Activated CD4-positive, alpha-beta T cell treated with anti-CD3 and anti-CD28 coated beads, Interleukin-2, amount 10 ng/mL, durations not matched to agents 24 days and 14 days (primary cell): ENCODE measurements at regions of chr9 and their contacts with region 1.

Region 1: DNA sequence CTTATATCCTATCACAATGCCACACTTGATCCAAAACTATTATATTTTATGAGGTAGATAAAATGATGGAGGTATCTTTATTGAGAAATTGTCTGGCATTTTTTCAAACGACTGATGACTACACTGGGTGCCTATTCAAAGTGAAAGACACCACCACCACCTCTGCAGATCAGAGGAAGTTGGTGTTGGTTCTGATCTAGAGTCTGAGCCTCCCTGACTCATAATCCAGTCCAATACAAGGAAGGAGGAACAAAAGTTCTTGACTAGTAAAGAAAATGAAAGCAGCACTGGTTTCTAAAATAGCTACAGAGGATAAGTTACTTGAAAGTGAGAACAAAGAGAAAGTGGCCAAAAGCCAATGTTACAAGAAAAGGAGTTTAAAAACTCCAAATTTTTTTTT is 139.9 kb downstream of the RFX3 start:
- DNase-seq: peak; percentile 77
- H3K4me3 Mint-ChIP-seq: peak overlapping the region; percentile 19
- H3K27ac Mint-ChIP-seq: peak overlapping the region; percentile 70
- H3K4me1 Mint-ChIP-seq: peaks cover 17% of the 10 kb centered on the region
- H3K27me3 Mint-ChIP-seq: no peaks in the 10 kb centered on the region

Region 2: DNA sequence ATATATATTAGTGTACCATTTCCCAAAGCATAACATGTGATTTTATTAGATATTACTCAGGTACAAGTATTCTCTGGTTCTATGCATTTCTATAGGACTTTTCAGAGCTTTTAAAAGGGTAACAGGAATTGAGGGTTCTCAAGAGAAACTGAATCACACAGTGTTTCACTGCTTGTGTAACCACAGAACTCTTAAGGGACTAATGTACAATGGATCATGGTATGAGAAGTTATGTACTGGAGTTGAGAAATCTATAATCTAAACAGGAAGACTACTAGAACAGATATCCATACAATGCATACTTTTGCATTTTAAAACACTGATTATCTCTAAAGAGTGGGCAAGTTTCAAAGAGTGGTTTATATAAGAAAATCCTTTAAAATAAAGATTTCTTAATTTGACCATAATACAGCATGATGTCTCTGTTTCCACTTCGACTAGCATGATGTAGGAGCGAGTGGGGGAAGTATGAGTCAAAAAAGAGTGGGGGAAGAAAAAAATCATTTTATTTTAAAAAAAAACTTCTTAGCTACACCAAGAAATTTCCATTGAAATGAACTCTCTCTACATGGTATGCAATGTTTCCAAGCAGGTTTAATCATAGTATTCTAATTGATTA is 43.6 kb before region 1 on chr9:
- intact Hi-C with region 1: loop called (anchors 1 kb)
- DNase-seq: no peak
- H3K4me3 Mint-ChIP-seq: no peak overlapping the region
- H3K27ac Mint-ChIP-seq: peak overlapping the region; percentile 66
- H3K4me1 Mint-ChIP-seq: peaks cover 15% of the 10 kb centered on the region
- H3K27me3 Mint-ChIP-seq: no peaks in the 10 kb centered on the region

Region 3: DNA sequence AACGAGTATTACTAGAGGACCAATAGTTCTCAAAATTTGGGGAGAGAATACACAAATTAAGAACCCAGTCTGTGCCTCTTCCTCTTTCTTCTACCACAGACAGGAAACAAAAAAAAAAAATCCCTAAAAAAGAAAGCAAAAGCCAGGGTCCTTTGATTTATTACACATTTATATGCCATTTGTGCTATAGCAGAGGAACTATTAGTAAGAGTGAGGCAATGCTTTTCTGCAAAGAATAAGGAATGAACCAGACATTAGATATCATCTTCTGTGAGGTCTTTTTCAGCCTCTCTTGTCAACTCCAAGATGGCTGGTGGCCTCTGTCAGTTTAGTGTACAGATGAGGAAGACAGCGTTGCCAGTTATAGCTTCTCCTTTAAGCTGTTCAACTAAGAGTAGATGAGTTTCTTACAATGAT is 12.4 kb after region 1 on chr9:
- intact Hi-C with region 1: loop called (anchors 1 kb)
- DNase-seq: peak; percentile 60
- H3K4me3 Mint-ChIP-seq: peak overlapping the region; percentile 48
- H3K27ac Mint-ChIP-seq: peak overlapping the region; percentile 48
- H3K4me1 Mint-ChIP-seq: peaks cover 13% of the 10 kb centered on the region
- H3K27me3 Mint-ChIP-seq: no peaks in the 10 kb centered on the region

Region 4: DNA sequence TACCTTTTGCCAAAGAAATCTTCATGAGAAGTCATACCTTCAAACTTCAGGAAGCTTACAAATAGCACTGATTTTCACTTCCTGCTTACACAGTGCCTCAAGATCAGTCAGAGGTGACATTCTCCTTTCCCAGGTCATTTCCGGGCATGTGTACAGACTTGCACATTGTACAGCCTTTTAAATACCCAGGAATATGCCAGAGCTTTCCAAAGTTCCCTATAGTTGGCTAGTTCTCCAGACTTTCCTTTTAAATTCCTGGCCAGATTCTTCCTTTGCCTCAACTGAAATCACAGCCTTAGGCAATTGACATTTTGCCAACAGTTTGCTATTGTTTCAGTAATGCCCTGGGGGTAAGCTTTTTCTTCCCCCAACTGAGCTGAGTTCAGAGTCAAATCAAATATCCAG is 92.7 kb after region 1 on chr9:
- intact Hi-C with region 1: loop called (anchors 5 kb)
- DNase-seq: peak; percentile 60
- H3K4me3 Mint-ChIP-seq: peak overlapping the region; percentile 78
- H3K27ac Mint-ChIP-seq: peak overlapping the region; percentile 67
- H3K4me1 Mint-ChIP-seq: peaks cover 51% of the 10 kb centered on the region
- H3K27me3 Mint-ChIP-seq: no peaks in the 10 kb centered on the region

Region 5: DNA sequence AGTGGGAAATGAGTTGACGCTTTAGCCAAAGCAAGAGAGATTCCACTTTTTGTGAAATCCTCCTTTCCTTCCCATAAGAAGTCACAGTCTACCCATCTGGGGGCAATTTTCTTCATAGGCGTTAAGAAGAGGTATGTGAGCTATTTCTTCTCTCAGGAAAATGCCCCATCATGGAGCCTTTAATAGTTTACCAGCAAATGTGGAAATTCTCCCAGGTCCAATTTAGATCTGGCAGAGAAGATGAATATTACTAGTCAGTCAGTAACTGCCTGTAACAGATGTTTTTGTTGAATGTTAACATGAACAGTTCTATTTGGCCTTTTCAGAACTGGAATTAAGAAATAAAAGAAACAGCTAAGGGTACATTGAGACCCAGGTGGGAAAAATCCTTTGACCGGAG is 296.3 kb after region 1 on chr9:
- intact Hi-C with region 1: no loop called
- DNase-seq: no peak
- H3K4me3 Mint-ChIP-seq: no peak overlapping the region
- H3K27ac Mint-ChIP-seq: no peak overlapping the region
- H3K4me1 Mint-ChIP-seq: no peaks in the 10 kb centered on the region
- H3K27me3 Mint-ChIP-seq: no peaks in the 10 kb centered on the region

Region 6: DNA sequence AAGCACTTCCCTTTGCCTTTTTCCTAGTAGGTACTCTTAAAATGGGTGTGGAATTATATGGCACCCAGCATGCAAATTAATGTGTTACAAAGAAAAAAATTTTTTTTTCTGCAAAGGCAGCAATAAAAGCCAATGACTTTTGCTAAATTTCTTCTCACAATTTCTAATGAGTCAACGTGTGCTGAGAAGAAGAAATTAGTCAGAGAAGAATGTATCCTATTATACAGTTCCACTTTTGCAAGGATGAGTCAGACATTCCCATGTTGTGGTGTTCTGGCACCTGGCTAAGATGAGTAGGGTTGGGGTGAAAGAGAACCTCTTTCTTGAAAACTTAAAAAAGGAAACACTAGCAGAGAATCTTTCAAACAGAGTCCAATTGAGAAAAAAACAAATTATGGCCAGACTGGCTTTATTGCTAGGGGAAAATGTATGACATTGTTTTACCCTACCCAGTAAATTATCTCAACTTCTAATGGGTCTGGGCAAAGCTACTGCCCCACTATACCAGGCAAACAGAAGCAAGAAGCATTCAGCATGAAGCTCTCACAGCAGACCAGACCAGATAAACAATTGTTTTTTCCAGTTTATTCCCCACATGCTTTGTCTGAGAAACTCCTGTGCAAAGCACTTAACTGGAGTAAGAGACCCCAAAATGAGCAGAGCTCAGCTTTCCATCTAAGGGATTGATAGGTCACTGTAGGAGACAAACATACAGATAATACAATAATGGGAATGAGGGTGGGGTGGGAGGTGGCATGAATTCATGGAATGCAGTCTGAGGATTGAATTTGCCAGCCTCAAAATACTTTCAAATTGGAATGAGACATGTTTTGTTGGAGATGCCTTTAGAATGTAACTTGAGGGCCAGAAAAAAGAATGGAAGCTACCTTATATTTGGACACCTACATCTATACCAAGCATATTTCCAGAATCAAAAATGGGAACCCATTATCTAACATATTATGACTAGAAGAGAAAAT is 360.7 kb after region 1 on chr9:
- intact Hi-C with region 1: loop called (anchors 10 kb)
- DNase-seq: no peak
- H3K4me3 Mint-ChIP-seq: no peak overlapping the region
- H3K27ac Mint-ChIP-seq: peak overlapping the region; percentile 54
- H3K4me1 Mint-ChIP-seq: peaks cover 15% of the 10 kb centered on the region
- H3K27me3 Mint-ChIP-seq: no peaks in the 10 kb centered on the region